HCT116 (cell line): ENCODE measurements at regions of chr18 and their contacts with region 1.

Region 1: DNA sequence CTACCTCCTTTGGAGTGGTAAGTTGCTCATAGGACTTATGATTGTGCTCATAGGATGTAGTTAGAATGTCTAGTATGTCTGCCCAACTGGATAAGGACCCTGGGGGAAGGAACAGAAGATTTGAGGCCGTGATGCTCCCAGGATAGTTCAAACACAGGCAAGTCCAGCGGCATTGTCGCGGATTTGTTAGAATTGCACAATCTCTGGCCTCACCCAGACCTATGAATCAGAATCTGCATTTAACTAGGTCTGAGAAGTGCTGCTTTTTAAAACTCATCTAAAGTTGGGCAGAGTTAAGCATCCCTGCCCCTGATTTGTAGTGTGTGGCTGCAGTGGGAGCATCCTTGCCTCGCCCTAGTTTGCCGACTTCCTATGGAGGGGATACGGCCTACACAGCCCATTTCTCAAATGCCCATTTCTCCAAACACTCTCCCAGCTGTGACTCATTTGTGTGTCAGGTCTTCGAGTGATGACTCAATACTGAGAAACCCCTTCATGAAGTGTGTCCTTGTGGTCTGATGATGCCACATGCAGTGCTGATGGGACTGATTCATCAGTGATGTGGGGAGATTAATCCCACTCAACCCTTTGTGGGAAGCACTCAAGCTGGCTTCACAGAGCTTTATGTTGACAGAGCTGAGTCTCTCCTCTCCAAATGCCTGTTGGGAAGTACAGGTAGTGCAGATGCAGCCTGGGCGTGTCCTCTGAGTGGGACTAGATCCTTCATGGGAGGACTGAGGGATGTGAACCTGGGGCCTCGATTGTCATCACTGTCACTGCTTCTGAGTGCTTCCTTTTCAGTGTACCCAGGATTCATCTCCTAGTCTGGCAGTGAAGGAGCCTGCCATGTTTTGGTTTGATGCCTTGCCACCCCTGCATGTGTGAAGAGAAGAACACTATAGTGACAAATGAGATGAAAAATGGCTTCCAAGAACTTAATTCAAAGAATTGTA is 18.7 kb downstream of the SMIM21 start:
- DNase-seq: peak; percentile 98
- ATAC-seq: peak; percentile 95
- H3K4me3 ChIP-seq: no peak overlapping the region
- H3K27ac ChIP-seq: no peak overlapping the region
- H3K4me1 ChIP-seq: peaks cover 14 to 25% of the 10 kb centered on the region in 2 experiments
- H3K27me3 ChIP-seq: peaks cover 31% of the 10 kb centered on the region; the same call in 1 of the 2 replicates
- CTCF ChIP-seq: 0 out of 6 replicates have a peak, but pooled peaks of 1 of the 3 experiments have one; percentile 3
- POLR2A ChIP-seq: no peak
- RAD21 ChIP-seq: peak; percentile 32; the same call in 1 of the 2 replicates

Region 2: DNA sequence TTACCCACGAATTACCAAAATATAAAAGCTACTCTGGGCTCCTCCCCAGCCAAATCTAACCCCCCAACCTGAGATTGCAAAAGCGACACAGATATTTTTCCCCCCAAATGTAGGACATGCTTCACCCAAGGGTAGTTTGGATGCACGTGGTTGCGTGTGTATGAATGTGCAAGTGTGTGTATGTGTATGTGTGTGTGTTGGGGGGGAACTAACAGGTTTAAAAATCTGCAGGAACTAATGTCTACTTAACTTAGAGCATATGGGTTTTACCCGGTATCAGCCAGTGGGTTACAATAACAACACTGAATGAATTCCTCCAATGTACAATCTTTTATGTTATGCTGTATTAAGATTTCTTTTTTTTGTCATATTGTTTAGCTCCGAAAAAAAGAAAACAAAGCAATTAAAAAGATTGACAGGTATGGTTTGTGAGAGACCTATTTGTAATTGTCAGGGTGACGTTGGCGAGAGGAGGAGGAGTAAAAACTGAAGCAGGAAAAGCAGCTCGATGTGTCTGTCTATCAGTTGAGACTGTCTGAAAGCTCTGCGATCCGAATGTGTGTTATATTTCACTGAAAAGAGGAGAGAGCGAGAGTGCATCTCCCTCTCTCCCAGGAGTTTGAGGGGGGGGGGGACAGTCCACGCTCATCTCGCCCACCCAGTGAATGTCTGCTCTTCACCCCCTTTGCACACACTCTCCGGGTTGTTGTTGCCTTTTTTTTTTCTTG is 198.4 kb before region 1 on chr18 and contains the start of gene TSHZ1:
- CTCF ChIA-PET with region 1: no interaction called
- POLR2A ChIA-PET with region 1: no interaction called
- RAD21 ChIA-PET with region 1: no interaction called
- intact Hi-C with region 1: loop called (anchors 5 kb)
- DNase-seq: peak; percentile 72
- ATAC-seq: peak; percentile 13; the same call in 1 of the 2 replicates
- H3K4me3 ChIP-seq: peak within 1 kb of the TSS; percentile 75 to 93
- H3K27ac ChIP-seq: peak within 1 kb of the TSS; percentile 96
- H3K4me1 ChIP-seq: peaks cover 24 to 38% of the 10 kb centered on the region in 2 experiments
- H3K27me3 ChIP-seq: no peaks in the 10 kb centered on the region
- CTCF ChIP-seq: no peak
- POLR2A ChIP-seq: peak; percentile 55
- RAD21 ChIP-seq: no peak
- total RNA-seq, gene TSHZ1: 5.7 TPM

Region 3: GRCh38 chr18:75438891-75439290 is 30.1 kb after region 1 on chr18:
- CTCF ChIA-PET with region 1: no interaction called
- POLR2A ChIA-PET with region 1: no interaction called
- RAD21 ChIA-PET with region 1: no interaction called
- intact Hi-C with region 1: no loop called
- DNase-seq: no peak
- ATAC-seq: no peak
- H3K4me3 ChIP-seq: no peak overlapping the region
- H3K27ac ChIP-seq: no peak overlapping the region
- H3K4me1 ChIP-seq: no peaks in the 10 kb centered on the region
- H3K27me3 ChIP-seq: no peaks in the 10 kb centered on the region
- CTCF ChIP-seq: no peak
- POLR2A ChIP-seq: no peak
- RAD21 ChIP-seq: no peak